ENCODE measurements at regions of chr1 and their contacts with region 1.

Region 1: DNA sequence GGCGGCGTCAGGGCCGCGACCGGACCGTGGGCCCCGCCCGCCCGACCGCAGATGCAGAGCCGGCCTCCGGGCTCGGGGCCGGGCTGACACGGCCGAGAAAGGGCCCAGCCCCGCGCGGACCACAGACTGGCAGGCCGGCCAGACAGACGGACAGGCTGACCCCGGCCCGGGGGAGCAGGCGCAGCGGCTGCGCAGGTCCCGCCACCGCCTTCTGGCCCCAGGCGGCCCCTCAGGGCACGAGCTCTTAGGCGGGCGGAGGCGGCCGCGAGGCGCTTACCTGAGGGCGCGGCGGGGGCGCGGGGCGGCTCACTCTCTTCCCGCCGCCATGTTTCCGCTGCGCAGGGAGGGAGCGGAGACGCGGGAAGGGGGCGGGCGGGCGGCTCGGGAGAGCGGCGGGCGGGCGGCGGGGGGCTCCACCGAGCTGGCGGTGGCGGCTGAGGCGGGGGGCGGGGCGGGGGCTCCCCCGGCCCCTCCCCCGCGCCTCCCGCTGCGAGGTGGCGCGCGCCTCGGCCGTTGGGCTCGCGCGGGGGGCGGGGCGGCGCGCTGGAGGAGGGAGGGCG is at the start of gene SCMH1:
- DNase-seq: peak; percentile 22 to 76
- H3K4me3 ChIP-seq: peak within 1 kb of the TSS; percentile 96 to 98
- H3K27ac ChIP-seq: peak within 1 kb of the TSS; percentile 100
- H3K4me1 ChIP-seq: peaks cover 0 to 22% (median 6%) of the 10 kb centered on the region in 4 donors
- H3K27me3 ChIP-seq: no peaks in the 10 kb centered on the region
- CTCF ChIP-seq: no peak

Region 2: GRCh38 chr1:40862008-40862863 is 379.6 kb before region 1 on chr1 and contains the start of gene CITED4:
- intact Hi-C with region 1: loop called (anchors 5 kb)
- DNase-seq: peak; percentile 94 to 96
- H3K4me3 ChIP-seq: peak within 1 kb of the TSS; percentile 83 to 91
- H3K27ac ChIP-seq: peak within 1 kb of the TSS; percentile 83 to 95
- H3K4me1 ChIP-seq: peaks cover 0 to 32% (median 21%) of the 10 kb centered on the region in 4 donors
- H3K27me3 ChIP-seq: no peaks in the 10 kb centered on the region
- CTCF ChIP-seq: peak; percentile 17 to 28

Region 3: DNA sequence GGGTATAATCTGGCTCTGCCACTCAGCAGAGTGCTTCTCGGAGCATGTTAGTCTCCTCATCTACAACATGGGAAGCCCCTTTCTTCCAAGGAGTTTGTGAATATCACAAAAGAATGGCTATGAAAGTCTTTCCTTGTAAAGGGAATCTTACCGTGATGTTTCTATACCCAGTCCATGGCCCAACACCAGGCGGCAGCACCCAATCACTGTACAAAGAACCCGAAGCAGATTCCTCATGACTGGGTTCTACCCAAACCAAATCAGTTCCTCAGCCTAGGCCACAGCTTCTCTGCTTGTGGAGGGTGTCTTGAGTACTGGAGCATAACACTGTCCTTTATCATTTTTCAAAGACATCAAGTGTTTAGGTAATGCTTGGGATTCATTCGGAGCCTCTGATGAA is 203.8 kb before region 1 on chr1:
- intact Hi-C with region 1: loop called (anchors 10 kb)
- DNase-seq: no peak
- H3K4me3 ChIP-seq: no peak overlapping the region
- H3K27ac ChIP-seq: no peak overlapping the region
- H3K4me1 ChIP-seq: no peaks in the 10 kb centered on the region
- H3K27me3 ChIP-seq: no peaks in the 10 kb centered on the region
- CTCF ChIP-seq: peak; percentile 6 to 15

Measured in tibial artery (tissue), 4 donors.